Sciatic nerve (tissue), 2 donors: ENCODE measurements at regions of chr1 and their contacts with region 1.

Region 1: GRCh38 chr1:2477791-2478499 is 1.9 kb downstream of the PLCH2 start:
- DNase-seq: no peak
- ATAC-seq: no peak

Region 2: DNA sequence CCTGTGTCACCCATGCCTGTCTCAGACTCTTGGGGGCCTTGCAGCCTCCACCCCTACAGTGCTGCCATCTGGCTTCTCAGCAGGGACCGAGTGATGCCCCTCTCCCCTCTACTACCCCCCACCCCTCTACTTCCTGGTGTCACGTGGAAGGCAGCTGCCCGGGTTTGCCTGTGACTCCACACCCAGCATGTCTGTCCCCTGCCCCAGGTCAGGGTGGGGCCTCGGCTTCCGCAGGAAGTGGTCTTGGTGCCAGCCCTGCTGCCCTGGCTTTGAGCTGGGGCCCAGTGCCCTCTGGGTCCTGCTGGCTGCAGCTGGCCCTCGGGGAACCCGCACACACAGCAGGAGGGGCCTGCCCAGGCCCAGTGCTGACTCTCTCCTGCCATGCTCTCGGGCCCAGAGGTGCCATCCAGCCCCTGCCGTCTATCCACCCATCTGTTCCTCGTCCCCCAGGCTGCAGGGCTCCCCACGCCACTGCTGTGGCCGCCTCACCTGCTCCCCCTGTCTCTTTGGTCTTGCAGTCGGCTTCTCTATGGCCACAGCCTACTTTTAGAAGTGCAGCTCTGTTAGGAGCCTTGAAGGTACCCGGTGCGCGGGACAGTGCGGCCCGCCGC is 22.1 kb after region 1 on chr1:
- intact Hi-C with region 1: no loop called
- DNase-seq: no peak
- ATAC-seq: no peak

Region 3: GRCh38 chr1:2545759-2546514 is 68.0 kb after region 1 on chr1:
- intact Hi-C with region 1: loop called (anchors 1 kb)
- DNase-seq: peak; percentile 92
- ATAC-seq: peak; percentile 65